ENCODE measurements at regions of chr12 and their contacts with region 1.

Region 1: DNA sequence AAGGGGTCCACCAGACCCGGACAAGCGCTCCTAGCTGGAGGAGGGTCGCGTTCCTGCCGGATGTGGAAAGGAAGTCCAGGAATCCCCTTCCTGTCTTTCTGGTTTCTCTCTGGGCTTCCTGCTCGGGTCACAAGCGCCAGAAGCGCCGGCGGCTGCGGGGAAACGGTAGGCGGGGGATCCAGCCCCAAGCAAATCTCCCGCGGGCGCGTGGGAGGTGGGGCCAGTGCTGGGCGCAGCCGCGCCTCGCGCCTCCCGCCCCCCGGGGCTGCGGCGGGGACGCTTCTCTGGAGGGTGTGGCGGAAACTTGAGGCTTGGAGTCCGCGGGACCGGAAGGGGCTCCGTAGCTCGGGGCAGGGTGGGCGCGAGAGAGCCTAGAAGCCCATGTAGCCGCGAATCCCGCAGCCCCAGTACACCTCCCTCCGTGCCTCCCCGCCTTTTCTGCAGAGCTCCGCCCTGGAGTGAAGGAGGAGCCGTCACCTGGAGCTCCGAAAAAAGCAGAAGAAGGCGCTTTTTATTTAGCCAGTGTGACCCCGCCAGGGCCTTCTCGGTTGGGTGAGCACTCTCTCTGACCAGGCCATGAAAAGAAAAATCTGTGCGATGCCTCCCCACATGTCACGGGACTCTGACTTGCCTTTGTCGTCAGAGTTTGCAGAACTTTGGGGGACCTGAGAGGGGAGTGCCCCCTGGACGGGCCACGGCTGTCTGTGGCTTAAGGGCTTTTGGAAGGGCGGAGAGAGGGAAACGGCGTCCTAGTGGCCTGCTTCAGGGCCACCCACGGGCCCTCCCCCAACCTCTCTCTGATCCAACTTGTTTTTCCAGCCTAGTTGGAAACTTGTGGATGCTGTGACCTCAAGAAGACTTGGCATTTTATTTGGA is 21.4 kb upstream of the CLEC2D start:
- DNase-seq: peak; percentile 85 to 97
- H3K4me3 ChIP-seq: peak overlapping the region; percentile 81
- H3K27ac ChIP-seq: peak overlapping the region; percentile 88
- H3K4me1 ChIP-seq: peaks cover 40% of the 10 kb centered on the region
- H3K27me3 ChIP-seq: no peaks in the 10 kb centered on the region
- CTCF ChIP-seq: 0 out of 2 replicates have a peak, but pooled peaks have one; percentile 10

Region 2: DNA sequence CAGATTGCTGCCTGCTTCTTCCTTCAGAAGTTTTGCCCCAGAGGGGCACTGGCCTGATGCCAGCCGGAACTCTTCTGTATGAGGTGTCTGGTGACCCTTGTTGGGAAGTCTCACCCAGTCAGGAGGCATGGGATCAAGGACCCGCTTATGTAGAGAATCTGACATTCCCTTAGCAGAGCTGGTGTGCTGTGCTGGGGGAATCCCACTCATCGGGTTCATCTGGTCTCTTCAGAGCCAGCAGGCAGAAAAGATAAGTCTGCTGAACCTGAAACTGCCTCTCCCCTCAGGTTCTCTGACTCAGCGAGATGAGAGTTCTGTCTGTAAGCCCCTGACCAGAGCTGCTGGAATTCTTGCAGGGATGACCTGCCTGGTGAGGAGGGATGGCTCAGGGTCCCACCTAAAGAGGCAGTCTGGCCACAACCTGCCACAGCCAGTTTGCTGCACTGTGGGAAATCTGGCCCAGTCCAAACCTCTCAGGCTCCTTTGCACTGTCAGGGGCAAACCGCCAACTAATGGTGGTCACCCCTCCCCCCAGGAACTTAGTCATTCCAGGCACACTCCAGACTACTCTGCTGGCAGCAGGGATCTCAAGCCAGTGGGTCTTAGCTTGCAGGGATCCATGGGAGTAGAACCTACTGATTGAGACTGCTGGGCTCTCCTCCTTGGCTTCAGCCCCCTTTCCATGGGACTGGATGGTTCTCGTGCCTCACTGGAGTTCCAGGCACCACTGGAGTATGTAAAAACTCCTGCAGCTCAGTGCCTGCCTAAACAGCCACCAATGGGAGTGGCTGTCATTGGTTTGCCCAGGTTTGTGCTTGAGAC is 25.6 kb after region 1 on chr12:
- CTCF ChIA-PET with region 1: no interaction called
- POLR2A ChIA-PET with region 1: interaction called, 7 read pairs
- intact Hi-C with region 1: loop called (anchors 1 kb)
- DNase-seq: peak; percentile 95 to 96
- H3K4me3 ChIP-seq: peak overlapping the region; percentile 5; the same call in 1 of the 2 replicates
- H3K27ac ChIP-seq: peak overlapping the region; percentile 79
- H3K4me1 ChIP-seq: peaks cover 35% of the 10 kb centered on the region
- H3K27me3 ChIP-seq: no peaks in the 10 kb centered on the region
- CTCF ChIP-seq: no peak

Region 3: GRCh38 chr12:9721394-9722092 is 73.5 kb after region 1 on chr12:
- CTCF ChIA-PET with region 1: no interaction called
- POLR2A ChIA-PET with region 1: no interaction called
- intact Hi-C with region 1: loop called (anchors 1 kb)
- DNase-seq: peak in 1 of 2 experiments; percentile 90
- H3K4me3 ChIP-seq: no peak overlapping the region
- H3K27ac ChIP-seq: peak overlapping the region; percentile 69
- H3K4me1 ChIP-seq: peaks cover 25% of the 10 kb centered on the region
- H3K27me3 ChIP-seq: no peaks in the 10 kb centered on the region
- CTCF ChIP-seq: no peak

Region 4: GRCh38 chr12:9731797-9732196 is 83.7 kb after region 1 on chr12:
- CTCF ChIA-PET with region 1: no interaction called
- POLR2A ChIA-PET with region 1: no interaction called
- intact Hi-C with region 1: no loop called
- DNase-seq: no peak
- H3K4me3 ChIP-seq: no peak overlapping the region
- H3K27ac ChIP-seq: no peak overlapping the region
- H3K4me1 ChIP-seq: peaks cover 8% of the 10 kb centered on the region; the same call in 1 of the 2 replicates
- H3K27me3 ChIP-seq: no peaks in the 10 kb centered on the region
- CTCF ChIP-seq: no peak

Region 5: DNA sequence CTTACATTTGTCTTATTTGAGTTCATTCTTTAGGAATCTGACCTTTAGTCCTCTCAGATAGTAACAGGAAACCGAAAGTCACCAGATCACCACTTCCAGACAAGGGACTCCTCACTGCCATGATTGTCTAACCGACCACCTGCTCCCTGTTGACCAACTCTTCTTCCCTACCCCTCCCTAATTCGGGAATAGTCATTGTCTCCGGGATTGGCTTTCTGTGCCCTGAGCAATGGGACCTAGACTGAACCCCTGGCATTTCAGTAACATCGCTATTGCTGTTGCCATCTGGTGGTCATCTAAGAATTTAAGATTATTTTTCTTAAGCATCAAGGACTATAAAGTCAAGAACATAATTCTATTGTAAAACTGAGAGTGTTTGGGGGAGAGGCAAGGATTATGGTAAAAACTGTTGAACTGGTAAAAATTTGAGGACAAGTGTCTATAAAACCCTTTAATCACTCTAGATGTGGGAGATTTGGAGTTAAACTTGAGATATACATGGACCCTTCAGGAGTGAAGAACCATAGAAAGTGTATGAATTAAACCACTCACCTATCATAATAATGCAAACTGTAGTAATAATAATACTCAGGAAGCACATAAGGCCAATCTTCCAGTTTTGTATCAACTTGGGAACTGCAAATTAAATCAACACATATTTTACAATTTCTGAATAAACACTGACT is 277.8 kb after region 1 on chr12:
- CTCF ChIA-PET with region 1: no interaction called
- POLR2A ChIA-PET with region 1: interaction called, 10 read pairs
- intact Hi-C with region 1: no loop called
- DNase-seq: peak in 1 of 2 experiments; percentile 6
- H3K4me3 ChIP-seq: 0 out of 2 replicates have a peak overlapping the region, but pooled peaks have one; percentile 9
- H3K27ac ChIP-seq: no peak overlapping the region
- H3K4me1 ChIP-seq: no peaks in the 10 kb centered on the region
- H3K27me3 ChIP-seq: no peaks in the 10 kb centered on the region
- CTCF ChIP-seq: peak; percentile 70

Region 6: GRCh38 chr12:10130042-10130441 is 482.0 kb after region 1 on chr12 and contains the start of gene CLEC7A:
- CTCF ChIA-PET with region 1: no interaction called
- POLR2A ChIA-PET with region 1: no interaction called
- intact Hi-C with region 1: no loop called
- DNase-seq: peak in 1 of 2 experiments; percentile 68
- H3K4me3 ChIP-seq: no peak within 1 kb of the TSS
- H3K27ac ChIP-seq: peak within 1 kb of the TSS; percentile 21; the same call in 1 of the 2 replicates
- H3K4me1 ChIP-seq: peaks cover 18% of the 10 kb centered on the region
- H3K27me3 ChIP-seq: no peaks in the 10 kb centered on the region
- CTCF ChIP-seq: no peak
- total RNA-seq, gene CLEC7A: 5.1 and 6.1 TPM in 2 replicates

Measured in PC-9 (cell line).